T-cell (primary cell): ENCODE measurements at regions of chr7 and their contacts with region 1.

Region 1: DNA sequence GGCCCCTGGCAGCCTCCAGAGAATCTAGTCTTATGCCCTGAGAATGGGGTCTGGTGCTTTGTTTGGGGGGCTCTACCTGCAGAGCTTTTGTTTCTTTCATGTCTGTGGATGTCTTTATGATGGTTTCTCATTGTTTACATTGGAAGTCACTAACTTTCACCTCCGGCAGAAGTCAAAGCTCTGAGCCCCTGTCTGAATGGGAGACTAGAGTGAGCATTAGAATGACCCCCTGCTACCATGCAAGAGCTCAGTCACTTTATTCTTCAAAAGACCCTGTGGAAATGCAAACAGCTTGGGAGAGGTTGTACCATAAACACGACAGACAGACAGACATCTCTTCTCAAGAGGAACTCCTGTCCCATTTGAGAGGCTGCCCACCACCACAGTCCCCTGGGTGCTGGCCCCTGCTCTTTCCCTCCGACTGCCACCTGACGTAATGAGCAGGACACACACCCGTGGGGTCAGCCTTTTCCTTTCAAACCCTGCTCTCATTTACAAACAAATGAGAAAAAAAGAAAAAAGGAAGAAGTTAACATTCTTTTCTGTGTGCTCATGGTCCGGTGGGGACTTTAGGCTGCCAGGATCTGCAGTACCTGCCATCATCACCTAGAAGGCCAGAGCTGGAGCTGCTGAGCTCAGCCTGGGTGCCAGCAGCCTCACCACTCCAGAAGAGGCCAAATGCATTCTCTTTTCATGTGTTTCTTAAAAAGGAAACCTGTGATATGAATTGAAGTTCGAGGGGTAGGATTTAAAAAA is 91.6 kb downstream of the FZD1 start:
- DNase-seq: no peak
- ATAC-seq: no peak
- H3K4me3 ChIP-seq: no peak overlapping the region
- H3K4me3 Mint-ChIP-seq: no peak overlapping the region
- H3K27ac ChIP-seq: no peak overlapping the region
- H3K27ac Mint-ChIP-seq: no peak overlapping the region
- H3K4me1 ChIP-seq: no peaks in the 10 kb centered on the region
- H3K4me1 Mint-ChIP-seq: no peaks in the 10 kb centered on the region
- H3K27me3 ChIP-seq: no peaks in the 10 kb centered on the region
- H3K27me3 Mint-ChIP-seq: peaks cover 0 to 3% of the 10 kb centered on the region in 2 donors

Region 2: GRCh38 chr7:91373111-91373800 is 17.4 kb after region 1 on chr7:
- CTCF ChIA-PET with region 1: interaction called in 1 of 2 experiments, 10 read pairs
- POLR2A ChIA-PET with region 1: no interaction called
- DNase-seq: no peak
- ATAC-seq: no peak
- H3K4me3 ChIP-seq: no peak overlapping the region
- H3K4me3 Mint-ChIP-seq: no peak overlapping the region
- H3K27ac ChIP-seq: no peak overlapping the region
- H3K27ac Mint-ChIP-seq: no peak overlapping the region
- H3K4me1 ChIP-seq: no peaks in the 10 kb centered on the region
- H3K4me1 Mint-ChIP-seq: no peaks in the 10 kb centered on the region
- H3K27me3 ChIP-seq: no peaks in the 10 kb centered on the region
- H3K27me3 Mint-ChIP-seq: peaks cover 0 to 1% of the 10 kb centered on the region in 2 donors